ENCODE measurements at regions of chr18 and their contacts with region 1.

Region 1: DNA sequence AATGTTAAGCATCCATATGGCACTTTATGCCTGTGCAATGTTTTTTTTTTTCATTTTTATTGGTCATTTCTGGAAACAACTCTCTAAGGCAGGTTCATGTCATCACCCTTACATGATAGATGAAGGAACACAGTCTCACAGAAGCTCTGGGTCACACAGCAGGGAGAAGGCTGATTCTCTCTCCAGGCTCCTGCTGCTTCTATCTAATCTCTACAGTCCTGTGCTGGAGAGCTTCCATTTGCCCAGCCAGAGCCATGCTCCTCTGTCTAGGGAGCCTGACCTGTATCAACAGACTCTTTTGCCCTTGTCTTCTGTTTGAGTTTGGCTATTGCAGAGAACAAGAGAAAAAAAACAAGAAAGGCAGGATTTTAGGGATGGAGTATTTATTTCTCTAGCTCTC is 584.8 kb downstream of the MBD2 start:
- DNase-seq: no peak
- ATAC-seq: peak; percentile 100

Region 2: GRCh38 chr18:53458944-53459580 is 180.6 kb before region 1 on chr18:
- intact Hi-C with region 1: no loop called
- DNase-seq: peak; percentile 61
- ATAC-seq: peak; percentile 63

Region 3: GRCh38 chr18:53567929-53568574 is 71.6 kb before region 1 on chr18:
- intact Hi-C with region 1: loop called (anchors 5 kb)
- DNase-seq: no peak
- ATAC-seq: peak; percentile 46